ENCODE measurements at regions of chr3 and their contacts with region 1.

Region 1: DNA sequence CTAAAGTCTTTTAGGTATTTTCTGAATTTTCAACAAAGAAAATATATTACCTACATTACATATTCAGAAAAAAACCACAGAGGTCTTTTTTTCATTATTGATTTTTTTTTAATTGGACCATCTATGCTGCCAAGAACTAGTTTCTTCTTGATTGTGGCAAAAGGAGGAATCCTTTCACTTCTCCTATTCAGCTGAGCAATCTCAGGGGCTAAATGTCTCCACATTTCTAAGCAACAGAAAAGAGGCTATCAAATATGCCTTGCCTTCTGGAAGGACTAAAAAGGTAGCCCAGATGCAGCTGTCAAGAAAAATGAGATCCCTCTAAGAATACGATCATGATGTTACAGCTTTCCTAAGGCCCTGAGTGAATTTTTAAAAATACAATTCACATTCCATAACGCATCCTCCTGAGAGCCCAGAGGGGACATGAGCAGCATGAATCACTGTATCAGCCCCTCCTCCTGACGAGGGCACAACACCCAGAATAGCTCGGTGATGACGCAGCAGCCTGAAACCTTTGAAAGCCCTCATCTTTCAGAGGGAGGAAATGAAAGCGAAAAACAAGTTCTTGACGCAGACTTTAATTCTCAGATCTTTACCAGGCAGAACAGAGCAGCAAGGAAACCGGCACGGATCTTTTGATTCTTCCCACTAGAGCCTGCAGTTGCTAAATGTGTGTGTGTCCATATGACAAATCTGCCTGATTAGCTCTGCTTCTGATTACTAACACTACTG is 24.6 kb downstream of the RUBCN start:
- DNase-seq: peak; percentile 67
- ATAC-seq: peak; percentile 93
- H3K4me3 Mint-ChIP-seq: peak overlapping the region; percentile 79
- H3K27ac Mint-ChIP-seq: peak overlapping the region; percentile 95
- H3K4me1 Mint-ChIP-seq: peaks cover 76% of the 10 kb centered on the region
- H3K27me3 Mint-ChIP-seq: no peaks in the 10 kb centered on the region
- CTCF ChIP-seq: no peak

Region 2: DNA sequence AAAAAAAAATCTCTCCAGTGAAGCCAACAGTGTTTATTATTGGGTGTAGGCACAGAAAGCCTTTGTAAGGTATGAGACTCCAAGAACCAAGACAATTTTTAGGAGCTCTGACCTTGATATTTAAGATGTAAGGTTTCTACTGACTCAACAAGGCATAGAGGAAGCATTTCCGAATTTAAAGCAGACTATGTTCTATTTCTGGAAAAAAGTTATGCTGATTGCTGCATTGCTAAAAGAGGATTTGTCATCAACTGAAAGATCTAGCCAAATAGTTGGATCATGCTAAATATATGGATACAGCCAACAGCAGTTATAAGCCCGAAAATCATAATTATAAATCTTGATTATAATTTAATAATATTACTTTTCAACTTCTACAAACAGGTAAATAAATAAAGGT is 629.3 kb before region 1 on chr3:
- CTCF ChIA-PET with region 1: no interaction called
- POLR2A ChIA-PET with region 1: no interaction called
- intact Hi-C with region 1: no loop called
- DNase-seq: no peak
- ATAC-seq: no peak
- H3K4me3 Mint-ChIP-seq: no peak overlapping the region
- H3K27ac Mint-ChIP-seq: no peak overlapping the region
- H3K4me1 Mint-ChIP-seq: peaks cover 6% of the 10 kb centered on the region
- H3K27me3 Mint-ChIP-seq: no peaks in the 10 kb centered on the region
- CTCF ChIP-seq: no peak

Region 3: DNA sequence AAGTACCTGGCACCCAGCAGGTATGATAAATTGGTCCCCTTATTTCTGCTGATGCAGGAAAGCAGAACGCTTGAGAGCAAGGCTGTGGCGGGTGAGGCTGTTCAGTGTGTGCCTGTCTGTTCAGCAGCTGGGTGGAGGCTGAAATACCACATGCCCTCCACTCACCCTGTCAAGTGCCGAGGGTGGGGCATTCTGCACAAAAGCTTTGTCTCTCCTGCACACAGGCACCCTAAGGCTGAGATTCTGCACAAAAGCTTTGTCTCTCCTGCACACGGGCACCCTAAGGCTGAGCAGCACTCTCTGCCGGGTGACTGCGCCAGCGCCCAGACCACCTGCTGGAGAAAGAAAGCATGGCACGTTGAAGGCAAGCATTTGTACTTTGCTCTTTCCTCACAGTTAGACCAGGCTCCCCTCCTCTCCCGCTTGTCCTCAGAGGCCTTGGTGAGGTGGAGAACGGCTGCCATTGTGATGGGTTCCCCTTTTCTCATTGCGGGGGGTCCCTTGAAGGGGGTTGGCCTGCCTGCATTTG is 253.9 kb before region 1 on chr3:
- CTCF ChIA-PET with region 1: no interaction called
- POLR2A ChIA-PET with region 1: no interaction called
- intact Hi-C with region 1: no loop called
- DNase-seq: no peak
- ATAC-seq: no peak
- H3K4me3 Mint-ChIP-seq: no peak overlapping the region
- H3K27ac Mint-ChIP-seq: no peak overlapping the region
- H3K4me1 Mint-ChIP-seq: peaks cover 14% of the 10 kb centered on the region
- H3K27me3 Mint-ChIP-seq: no peaks in the 10 kb centered on the region
- CTCF ChIP-seq: no peak

Region 4: DNA sequence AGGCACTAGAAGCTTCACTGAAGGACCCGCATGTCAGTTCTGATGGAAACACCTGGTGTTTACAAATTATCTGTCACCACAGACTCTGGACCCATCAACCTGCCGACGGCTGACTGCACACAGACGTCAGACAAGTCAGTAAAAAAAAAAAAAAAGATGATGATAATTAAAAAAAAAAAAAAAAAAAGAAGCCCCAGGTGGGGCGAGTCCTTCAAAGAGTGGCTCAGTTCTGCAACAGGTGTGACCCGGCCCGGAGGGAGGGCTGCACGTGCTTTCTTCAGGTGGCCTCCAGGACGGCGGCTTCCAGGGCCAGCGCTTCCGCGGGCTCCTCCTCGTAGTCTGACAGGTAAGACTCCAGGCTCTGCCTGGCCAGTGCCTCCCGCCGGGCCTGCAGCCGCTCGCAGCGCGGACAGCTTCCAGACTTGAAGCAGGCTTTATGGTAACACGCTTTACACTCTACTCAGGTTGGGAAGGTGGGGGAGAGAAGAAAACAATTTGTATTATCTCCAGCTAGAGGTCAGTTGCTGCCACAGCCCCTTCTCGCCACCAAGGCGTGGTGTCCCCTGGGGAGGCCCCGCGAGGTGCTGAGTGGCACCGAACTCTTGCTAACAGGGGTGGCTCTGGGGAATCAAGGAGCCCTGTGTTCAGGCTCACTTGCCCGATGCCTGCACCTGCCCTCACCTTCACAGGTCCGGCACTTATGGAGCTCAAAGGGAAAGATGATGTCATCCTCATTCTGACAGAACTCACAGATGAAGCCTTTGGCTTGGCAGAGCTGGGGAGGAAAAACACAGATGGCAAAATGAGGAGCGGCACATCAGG is 37.2 kb before region 1 on chr3:
- CTCF ChIA-PET with region 1: no interaction called
- POLR2A ChIA-PET with region 1: interaction called, 12 read pairs
- intact Hi-C with region 1: no loop called
- DNase-seq: peak; percentile 39
- ATAC-seq: peak; percentile 86
- H3K4me3 Mint-ChIP-seq: peak overlapping the region; percentile 70
- H3K27ac Mint-ChIP-seq: peak overlapping the region; percentile 70
- H3K4me1 Mint-ChIP-seq: peaks cover 43% of the 10 kb centered on the region
- H3K27me3 Mint-ChIP-seq: no peaks in the 10 kb centered on the region
- CTCF ChIP-seq: no peak

Region 5: DNA sequence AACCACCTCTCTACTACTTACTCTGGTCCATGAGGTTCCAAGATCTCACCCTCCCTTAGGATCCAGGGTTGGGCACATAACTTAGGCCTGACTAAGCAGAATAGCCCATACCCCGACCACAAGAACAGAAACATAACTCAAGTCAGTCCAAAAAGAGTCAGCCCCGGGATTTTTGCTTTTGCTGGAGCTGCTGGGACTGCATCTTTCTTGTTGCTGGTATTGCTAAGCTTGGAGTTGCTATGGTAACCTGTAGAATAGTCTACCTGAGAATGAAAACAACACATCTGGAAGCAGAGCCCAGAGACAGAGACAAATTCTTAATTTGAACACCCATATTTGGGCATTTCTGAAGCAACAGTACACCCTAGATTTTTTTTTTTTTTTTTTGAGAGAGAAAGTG is 18.1 kb after region 1 on chr3:
- CTCF ChIA-PET with region 1: interaction called, 5 read pairs
- POLR2A ChIA-PET with region 1: interaction called, 171 read pairs
- intact Hi-C with region 1: loop called (anchors 1 kb)
- DNase-seq: no peak
- ATAC-seq: no peak
- H3K4me3 Mint-ChIP-seq: no peak overlapping the region
- H3K27ac Mint-ChIP-seq: peak overlapping the region; percentile 82
- H3K4me1 Mint-ChIP-seq: peaks cover 73% of the 10 kb centered on the region
- H3K27me3 Mint-ChIP-seq: no peaks in the 10 kb centered on the region
- CTCF ChIP-seq: no peak

Region 6: GRCh38 chr3:197749601-197750395 is 37.7 kb after region 1 on chr3 and contains the start of gene FYTTD1:
- CTCF ChIA-PET with region 1: interaction called, 5 read pairs
- POLR2A ChIA-PET with region 1: interaction called, 25 read pairs
- intact Hi-C with region 1: loop called (anchors 1 kb)
- DNase-seq: peak; percentile 95
- ATAC-seq: peak; percentile 91
- H3K4me3 Mint-ChIP-seq: peak within 1 kb of the TSS; percentile 97
- H3K27ac Mint-ChIP-seq: peak within 1 kb of the TSS; percentile 94
- H3K4me1 Mint-ChIP-seq: peaks cover 42% of the 10 kb centered on the region
- H3K27me3 Mint-ChIP-seq: no peaks in the 10 kb centered on the region
- CTCF ChIP-seq: no peak
- total RNA-seq, gene FYTTD1: 78.6 and 84.2 TPM in 2 replicates

Region 7: GRCh38 chr3:197791113-197791891 is 79.2 kb after region 1 on chr3 and contains the start of gene LRCH3:
- CTCF ChIA-PET with region 1: no interaction called
- POLR2A ChIA-PET with region 1: interaction called, 26 read pairs
- intact Hi-C with region 1: loop called (anchors 1 kb)
- DNase-seq: peak; percentile 84
- ATAC-seq: peak; percentile 73
- H3K4me3 Mint-ChIP-seq: peak within 1 kb of the TSS; percentile 86
- H3K27ac Mint-ChIP-seq: peak within 1 kb of the TSS; percentile 97
- H3K4me1 Mint-ChIP-seq: peaks cover 63% of the 10 kb centered on the region
- H3K27me3 Mint-ChIP-seq: no peaks in the 10 kb centered on the region
- CTCF ChIP-seq: no peak
- total RNA-seq, gene LRCH3: 94.1 and 96.1 TPM in 2 replicates